HAP-1 (cell line): ENCODE measurements at regions of chr2 and their contacts with region 1.

Region 1: DNA sequence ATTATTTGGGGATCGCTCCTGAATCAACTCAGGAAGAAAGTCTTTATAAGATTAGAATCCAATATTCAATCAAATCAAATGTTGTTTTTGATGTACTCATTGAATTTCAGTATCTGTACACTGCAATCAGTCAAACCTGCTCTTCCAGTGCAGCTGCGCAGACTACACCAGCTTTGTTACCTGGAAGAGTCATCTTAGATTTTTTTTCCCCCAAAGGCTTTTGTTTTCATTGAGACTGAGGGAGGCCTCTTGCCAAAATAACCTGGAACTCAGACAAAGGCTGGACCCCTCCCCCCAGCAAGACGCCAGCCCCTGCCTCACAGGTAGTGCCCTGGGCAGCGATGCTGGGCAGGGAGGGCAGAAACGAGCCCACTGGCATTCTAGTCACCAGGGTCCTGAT is 74.8 kb downstream of the ARHGEF4 start:
- DNase-seq: no peak
- H3K4me3 ChIP-seq: no peak overlapping the region
- H3K4me1 ChIP-seq: no peaks in the 10 kb centered on the region
- H3K27me3 ChIP-seq: no peaks in the 10 kb centered on the region

Region 2: DNA sequence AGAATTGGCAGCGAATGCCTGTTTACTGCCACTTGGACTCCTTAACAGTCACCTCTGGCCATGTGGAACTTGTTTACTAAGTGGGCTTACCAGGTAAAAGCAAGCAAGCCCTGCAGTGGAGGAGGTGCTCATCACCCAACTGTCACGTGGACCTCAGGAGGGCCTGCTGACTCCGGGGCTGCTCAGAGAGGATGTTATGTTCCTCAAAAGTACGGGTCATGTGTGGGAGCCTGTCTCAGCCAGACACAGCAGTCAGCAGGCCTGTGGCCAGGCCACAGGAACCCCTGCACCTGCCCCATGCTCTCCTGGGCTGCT is 119.9 kb before region 1 on chr2:
- in situ Hi-C with region 1: loop called (anchors 5 kb)
- DNase-seq: no peak
- H3K4me3 ChIP-seq: no peak overlapping the region
- H3K4me1 ChIP-seq: no peaks in the 10 kb centered on the region
- H3K27me3 ChIP-seq: no peaks in the 10 kb centered on the region; the same call in 1 of the 2 replicates

Region 3: GRCh38 chr2:131010566-131010965 is 99.1 kb after region 1 on chr2:
- in situ Hi-C with region 1: no loop called
- DNase-seq: no peak
- H3K4me3 ChIP-seq: no peak overlapping the region
- H3K4me1 ChIP-seq: no peaks in the 10 kb centered on the region
- H3K27me3 ChIP-seq: no peaks in the 10 kb centered on the region